ENCODE measurements at regions of chr10 and their contacts with region 1.

Region 1: GRCh38 chr10:69515699-69516259 is 57.4 kb downstream of the NEUROG3 start:
- DNase-seq: peak; percentile 86
- CTCF ChIP-seq: peak; percentile 91

Region 2: GRCh38 chr10:69498711-69499476 is 16.9 kb before region 1 on chr10:
- CTCF ChIA-PET with region 1: interaction called, 16 read pairs
- POLR2A ChIA-PET with region 1: no interaction called
- DNase-seq: no peak
- CTCF ChIP-seq: no peak

Region 3: GRCh38 chr10:69629897-69630650 is 114.3 kb after region 1 on chr10 and contains the start of gene FAM241B:
- CTCF ChIA-PET with region 1: interaction called, 108 read pairs
- POLR2A ChIA-PET with region 1: no interaction called
- DNase-seq: peak; percentile 86
- CTCF ChIP-seq: peak; percentile 65

Region 4: GRCh38 chr10:69639291-69640195 is 123.8 kb after region 1 on chr10:
- CTCF ChIA-PET with region 1: interaction called, 108 read pairs
- POLR2A ChIA-PET with region 1: no interaction called
- DNase-seq: peak; percentile 75
- CTCF ChIP-seq: peak; percentile 68

Region 5: GRCh38 chr10:69716711-69717560 is 201.2 kb after region 1 on chr10:
- CTCF ChIA-PET with region 1: interaction called, 10 read pairs
- POLR2A ChIA-PET with region 1: no interaction called
- DNase-seq: peak; percentile 70
- CTCF ChIP-seq: peak; percentile 63

Measured in GM10248 (cell line).